Activated CD4-positive, alpha-beta memory T cell treated with anti-CD3 and anti-CD28 coated beads, Interleukin-2, amount 10 ng/mL, durations not matched to agents 7 days and 5 days (primary cell): ENCODE measurements at regions of chrX and their contacts with region 1.

Region 1: DNA sequence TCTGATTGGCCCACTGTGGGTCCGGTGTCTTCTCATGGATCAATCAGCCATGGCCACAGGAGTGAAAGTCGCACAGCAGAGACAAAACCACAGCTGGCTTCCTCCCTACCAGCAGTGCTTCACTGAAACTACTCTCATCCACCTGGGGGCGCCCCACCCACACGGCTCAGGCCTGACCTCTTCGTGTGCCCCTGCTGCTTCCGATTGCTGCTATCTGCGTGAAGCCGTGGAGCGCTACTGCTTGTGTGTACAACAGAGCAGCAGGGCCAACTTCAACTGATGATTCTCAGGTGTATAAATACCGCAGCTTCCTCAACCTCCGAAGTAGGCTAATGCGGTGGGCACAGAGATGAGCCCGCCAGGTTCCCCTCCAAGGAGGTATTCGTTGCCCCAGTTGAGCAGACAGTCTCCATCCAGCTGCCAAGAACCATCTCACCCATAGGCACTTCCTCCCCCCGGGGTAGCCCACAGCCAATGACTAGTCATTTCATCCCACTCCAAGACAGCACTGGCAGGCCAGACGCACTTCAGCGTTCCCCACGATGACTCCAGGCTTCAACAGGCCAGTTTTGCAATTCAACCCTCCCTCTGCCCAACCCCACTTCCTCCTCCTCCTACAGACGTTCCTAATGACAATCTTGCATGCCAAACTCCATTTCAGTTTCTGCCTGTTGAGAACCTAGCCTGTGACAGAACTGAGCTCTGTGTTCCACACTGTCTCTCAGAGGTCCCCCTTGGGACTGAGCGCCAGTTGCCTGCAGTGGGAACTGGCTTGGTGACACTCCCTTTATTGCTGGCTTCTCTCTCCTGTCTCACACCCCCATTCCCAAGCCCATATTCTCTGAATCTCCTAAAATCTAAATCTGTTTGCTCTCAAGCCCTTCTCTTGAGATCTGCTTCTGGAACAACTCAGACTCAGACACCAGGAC is 41.3 kb upstream of the ATP6AP2 start:
- DNase-seq: peak; percentile 78
- H3K4me3 Mint-ChIP-seq: no peak overlapping the region
- H3K27ac Mint-ChIP-seq: no peak overlapping the region
- H3K4me1 Mint-ChIP-seq: peaks cover 23% of the 10 kb centered on the region
- H3K27me3 Mint-ChIP-seq: peaks cover 23% of the 10 kb centered on the region

Region 2: GRCh38 chrX:40402831-40403533 is 136.5 kb before region 1 on chrX:
- CTCF ChIA-PET with region 1: no interaction called
- POLR2A ChIA-PET with region 1: no interaction called
- DNase-seq: no peak
- H3K4me3 Mint-ChIP-seq: no peak overlapping the region
- H3K27ac Mint-ChIP-seq: no peak overlapping the region
- H3K4me1 Mint-ChIP-seq: no peaks in the 10 kb centered on the region
- H3K27me3 Mint-ChIP-seq: peaks cover 3% of the 10 kb centered on the region

Region 3: GRCh38 chrX:40792433-40792832 is 253.0 kb after region 1 on chrX:
- CTCF ChIA-PET with region 1: interaction called, 18 read pairs
- POLR2A ChIA-PET with region 1: no interaction called
- DNase-seq: no peak
- H3K4me3 Mint-ChIP-seq: no peak overlapping the region
- H3K27ac Mint-ChIP-seq: no peak overlapping the region
- H3K4me1 Mint-ChIP-seq: no peaks in the 10 kb centered on the region
- H3K27me3 Mint-ChIP-seq: peaks cover 6% of the 10 kb centered on the region